ENCODE measurements at regions of chr4 and their contacts with region 1.

Region 1: DNA sequence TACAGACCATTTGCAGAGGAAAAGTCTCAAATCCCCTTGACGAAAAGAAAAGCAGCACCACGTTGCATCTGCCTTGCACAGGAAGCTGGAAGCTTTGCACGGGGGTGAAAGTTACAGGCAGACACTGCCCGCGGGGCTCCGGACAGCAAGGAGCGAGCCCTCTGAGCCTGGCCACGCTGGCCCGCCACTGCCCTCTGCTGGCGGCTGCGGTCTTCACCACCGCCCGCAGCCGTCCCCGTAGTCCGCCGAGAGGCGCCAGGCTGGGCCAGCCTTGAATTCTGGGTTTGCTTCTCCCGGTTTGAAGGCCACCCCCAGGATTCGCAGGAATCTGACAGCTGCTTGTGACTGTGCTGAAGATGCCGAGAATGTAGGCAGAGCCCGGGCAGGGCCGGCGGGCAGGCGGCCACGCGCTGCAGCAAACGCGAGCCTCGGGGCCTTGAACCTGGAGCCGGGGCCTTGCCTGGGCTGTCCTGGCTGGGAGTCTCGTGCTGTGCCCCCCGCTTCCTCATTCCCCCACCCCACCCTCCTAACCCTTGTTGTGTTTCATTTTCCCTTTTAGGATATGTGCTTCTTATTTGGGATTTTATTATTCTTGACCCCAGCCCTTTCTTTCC is 49.2 kb downstream of the ENPP6 start:
- DNase-seq: peak; percentile 28
- H3K4me3 ChIP-seq: no peak overlapping the region
- H3K27ac ChIP-seq: no peak overlapping the region
- H3K4me1 ChIP-seq: no peaks in the 10 kb centered on the region
- H3K27me3 ChIP-seq: peaks cover 3% of the 10 kb centered on the region
- CTCF ChIP-seq: peak; percentile 77 to 97

Region 2: DNA sequence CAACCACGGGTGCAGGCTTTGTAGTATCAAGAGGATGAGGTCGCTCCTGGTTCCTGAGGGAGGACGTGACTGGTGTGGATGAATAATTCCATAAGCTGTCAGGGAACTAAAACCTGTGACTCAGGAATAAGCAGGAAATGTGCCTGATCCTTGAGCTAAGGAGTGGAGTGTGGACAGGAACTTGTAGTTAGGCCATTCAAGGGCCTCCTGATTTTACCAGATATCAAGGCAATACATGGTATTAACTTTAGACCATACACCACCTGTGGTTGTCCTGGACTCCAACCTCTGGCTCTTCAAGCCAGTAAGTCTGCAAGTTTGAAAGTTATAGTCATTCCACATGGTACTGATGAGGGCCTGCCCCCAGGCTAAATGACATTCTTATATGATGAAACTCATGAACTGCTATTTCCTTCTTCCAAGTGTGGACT is 675.7 kb before region 1 on chr4:
- CTCF ChIA-PET with region 1: no interaction called
- dilution Hi-C with region 1: no loop called
- in situ Hi-C with region 1: loop called in 1 of 2 experiments (anchors 25 kb)
- intact Hi-C with region 1: no loop called
- DNase-seq: peak; percentile 86
- H3K4me3 ChIP-seq: no peak overlapping the region
- H3K27ac ChIP-seq: peak overlapping the region; percentile 57
- H3K4me1 ChIP-seq: peaks cover 27% of the 10 kb centered on the region
- H3K27me3 ChIP-seq: no peaks in the 10 kb centered on the region
- CTCF ChIP-seq: no peak

Region 3: DNA sequence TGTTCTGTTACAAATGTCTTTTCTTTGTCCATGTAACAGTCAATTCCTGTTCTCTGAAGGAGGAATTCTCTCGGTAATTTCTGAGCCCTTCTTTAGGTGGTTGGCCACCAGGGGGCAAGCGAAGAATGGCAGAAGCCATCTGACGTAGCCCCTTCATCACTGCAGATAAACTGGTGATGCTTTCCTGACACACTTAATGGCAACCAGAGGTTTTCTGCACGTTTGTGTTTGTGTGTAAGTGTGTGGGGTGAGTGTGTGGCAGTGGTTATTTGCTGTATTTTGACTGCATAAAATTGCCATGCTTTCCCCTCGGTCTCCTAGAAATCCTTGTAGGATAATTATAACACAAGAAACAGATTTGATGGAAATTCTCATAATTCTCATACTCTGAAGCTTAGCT is 328.2 kb before region 1 on chr4:
- CTCF ChIA-PET with region 1: no interaction called
- dilution Hi-C with region 1: loop called (anchors 10 kb)
- in situ Hi-C with region 1: loop called (anchors 5 to 10 kb)
- intact Hi-C with region 1: loop called (anchors 1 kb)
- DNase-seq: peak; percentile 46
- H3K4me3 ChIP-seq: no peak overlapping the region
- H3K27ac ChIP-seq: no peak overlapping the region
- H3K4me1 ChIP-seq: no peaks in the 10 kb centered on the region
- H3K27me3 ChIP-seq: peaks cover 3% of the 10 kb centered on the region
- CTCF ChIP-seq: peak; percentile 85 to 90

Region 4: GRCh38 chr4:184122631-184123408 is 45.7 kb before region 1 on chr4:
- CTCF ChIA-PET with region 1: no interaction called
- dilution Hi-C with region 1: no loop called
- in situ Hi-C with region 1: no loop called
- intact Hi-C with region 1: no loop called
- DNase-seq: no peak
- H3K4me3 ChIP-seq: no peak overlapping the region
- H3K27ac ChIP-seq: no peak overlapping the region
- H3K4me1 ChIP-seq: no peaks in the 10 kb centered on the region
- H3K27me3 ChIP-seq: no peaks in the 10 kb centered on the region
- CTCF ChIP-seq: no peak

Region 5: GRCh38 chr4:184228056-184228705 is 59.7 kb after region 1 on chr4:
- CTCF ChIA-PET with region 1: interaction called, 7 read pairs
- dilution Hi-C with region 1: loop called (anchors 5 kb)
- in situ Hi-C with region 1: no loop called
- intact Hi-C with region 1: no loop called
- DNase-seq: no peak
- H3K4me3 ChIP-seq: no peak overlapping the region
- H3K27ac ChIP-seq: no peak overlapping the region
- H3K4me1 ChIP-seq: no peaks in the 10 kb centered on the region
- H3K27me3 ChIP-seq: no peaks in the 10 kb centered on the region
- CTCF ChIP-seq: no peak

Measured in mammary epithelial cell (primary cell).